ENCODE measurements at regions of chrX and their contacts with region 1.

Region 1: GRCh38 chrX:103711533-103712369 is 1.0 kb downstream of the TMEM31 start:
- DNase-seq: peak; percentile 60
- H3K4me3 Mint-ChIP-seq: no peak overlapping the region
- H3K27ac Mint-ChIP-seq: no peak overlapping the region
- H3K4me1 Mint-ChIP-seq: no peaks in the 10 kb centered on the region
- H3K27me3 Mint-ChIP-seq: peaks cover 3% of the 10 kb centered on the region

Region 2: DNA sequence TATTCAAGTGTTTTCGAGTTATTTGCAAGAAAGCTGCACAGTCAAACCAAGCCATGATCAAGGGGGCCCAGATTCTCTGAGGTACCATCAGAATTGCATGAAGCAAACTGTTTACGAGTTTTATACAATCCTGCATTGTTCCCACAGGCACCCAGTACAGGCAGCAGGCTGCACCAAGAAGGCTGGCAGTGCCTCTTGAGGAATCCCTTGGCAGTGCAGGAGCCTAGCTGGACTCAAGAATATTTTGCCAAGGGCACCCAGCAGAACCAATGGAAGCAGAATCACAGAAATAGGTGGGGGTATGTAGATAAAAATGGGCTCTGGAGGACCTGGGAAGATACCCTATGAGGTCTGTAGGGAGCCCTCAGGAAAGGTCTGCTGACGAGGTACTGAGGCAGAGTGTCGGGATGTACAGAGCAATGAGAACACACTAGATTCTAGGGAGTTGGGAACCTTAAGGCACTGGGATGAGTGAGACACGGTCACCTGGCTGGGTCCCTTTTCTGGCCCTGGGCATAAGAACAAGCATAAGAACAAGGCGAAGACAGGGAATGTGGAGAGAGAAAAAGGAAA is 62.4 kb after region 1 on chrX:
- CTCF ChIA-PET with region 1: interaction called, 3 read pairs
- intact Hi-C with region 1: loop called (anchors 2 kb)
- DNase-seq: no peak
- H3K4me3 Mint-ChIP-seq: no peak overlapping the region
- H3K27ac Mint-ChIP-seq: no peak overlapping the region
- H3K4me1 Mint-ChIP-seq: no peaks in the 10 kb centered on the region
- H3K27me3 Mint-ChIP-seq: no peaks in the 10 kb centered on the region

Region 3: DNA sequence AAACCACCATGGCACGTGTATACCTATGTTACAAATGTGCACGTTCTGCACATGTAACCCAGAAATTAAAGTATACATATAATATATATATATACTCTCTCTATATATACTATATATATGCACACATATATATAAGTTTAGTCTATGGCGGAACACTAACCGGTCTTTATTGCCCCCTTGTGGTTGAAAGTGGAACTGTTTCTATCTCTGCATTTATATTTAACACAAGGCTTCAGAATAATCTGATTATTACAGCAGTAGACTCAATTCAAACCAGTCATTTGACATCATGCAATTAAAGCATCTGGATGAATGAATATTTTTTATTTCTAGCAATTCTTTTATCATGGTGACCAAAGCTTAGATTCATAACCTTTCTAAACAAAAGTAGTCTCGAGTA is 105.8 kb after region 1 on chrX:
- CTCF ChIA-PET with region 1: interaction called, 6 read pairs
- intact Hi-C with region 1: loop called (anchors 1 kb)
- DNase-seq: peak; percentile 25
- H3K4me3 Mint-ChIP-seq: no peak overlapping the region
- H3K27ac Mint-ChIP-seq: no peak overlapping the region
- H3K4me1 Mint-ChIP-seq: no peaks in the 10 kb centered on the region
- H3K27me3 Mint-ChIP-seq: peaks cover 8% of the 10 kb centered on the region